CD8-positive, alpha-beta T cell (primary cell): ENCODE measurements at regions of chr10 and their contacts with region 1.

Region 1: DNA sequence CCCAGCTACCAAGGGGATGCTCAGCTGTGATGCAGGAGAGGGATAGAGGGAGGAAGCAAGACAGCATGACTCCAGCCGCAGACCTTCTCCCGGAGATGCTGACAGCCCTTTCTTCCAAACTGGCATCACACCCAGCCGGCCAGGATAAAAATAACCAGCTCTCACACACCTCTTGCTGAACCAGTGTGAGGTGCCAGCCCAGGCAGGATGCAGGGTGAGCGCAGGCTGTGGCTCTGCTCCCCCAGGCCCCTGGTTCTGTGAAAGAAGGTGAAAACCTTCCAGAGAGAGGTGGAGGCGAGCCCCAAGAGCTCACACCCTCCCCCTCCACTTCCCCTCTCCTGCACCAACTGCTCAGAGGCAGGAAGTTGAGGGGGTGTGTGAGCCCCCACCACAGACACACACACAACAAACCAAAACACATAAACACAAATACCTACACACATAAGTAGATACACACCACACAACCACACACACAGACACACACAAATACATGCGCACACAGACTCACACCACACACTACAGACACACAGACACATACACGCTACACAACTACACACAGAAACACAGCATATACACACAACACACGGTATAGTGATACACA is 4.0 kb downstream of the GPR15LG start:
- DNase-seq: peak; percentile 24 to 88 (median 55)
- ATAC-seq: peak; percentile 91
- H3K4me3 ChIP-seq: peak overlapping the region; percentile 10 to 17
- H3K4me3 Mint-ChIP-seq: no peak overlapping the region
- H3K27ac ChIP-seq: peak overlapping the region; percentile 13 to 69
- H3K27ac Mint-ChIP-seq: no peak overlapping the region
- H3K4me1 ChIP-seq: peaks cover 31% of the 10 kb centered on the region
- H3K4me1 Mint-ChIP-seq: peaks cover 12% of the 10 kb centered on the region
- H3K27me3 ChIP-seq: peaks cover 0 to 2% of the 10 kb centered on the region in 2 experiments
- H3K27me3 Mint-ChIP-seq: no peaks in the 10 kb centered on the region
- CTCF ChIP-seq: no peak

Region 2: GRCh38 chr10:84126785-84127167 is 50.9 kb before region 1 on chr10:
- CTCF ChIA-PET with region 1: no interaction called
- POLR2A ChIA-PET with region 1: no interaction called
- intact Hi-C with region 1: no loop called
- DNase-seq: no peak
- ATAC-seq: no peak
- H3K4me3 ChIP-seq: no peak overlapping the region
- H3K4me3 Mint-ChIP-seq: no peak overlapping the region
- H3K27ac ChIP-seq: no peak overlapping the region
- H3K27ac Mint-ChIP-seq: no peak overlapping the region
- H3K4me1 ChIP-seq: no peaks in the 10 kb centered on the region
- H3K4me1 Mint-ChIP-seq: no peaks in the 10 kb centered on the region
- H3K27me3 ChIP-seq: peaks cover 0 to 7% of the 10 kb centered on the region in 2 experiments
- H3K27me3 Mint-ChIP-seq: peaks cover 26% of the 10 kb centered on the region
- CTCF ChIP-seq: no peak

Region 3: DNA sequence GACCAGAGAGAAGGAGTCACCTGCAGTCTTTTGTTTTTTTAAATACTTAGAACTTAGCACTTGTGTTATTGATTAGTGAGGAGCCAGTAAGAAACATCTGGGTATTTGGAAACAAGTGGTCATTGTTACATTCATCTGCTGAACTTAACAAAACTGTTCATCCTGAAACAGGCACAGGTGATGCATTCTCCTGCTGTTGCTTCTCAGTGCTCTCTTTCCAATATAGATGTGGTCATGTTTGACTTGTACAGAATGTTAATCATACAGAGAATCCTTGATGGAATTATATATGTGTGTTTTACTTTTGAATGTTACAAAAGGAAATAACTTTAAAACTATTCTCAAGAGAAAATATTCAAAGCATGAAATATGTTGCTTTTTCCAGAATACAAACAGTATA is 24.9 kb before region 1 on chr10:
- CTCF ChIA-PET with region 1: interaction called, 10 read pairs
- POLR2A ChIA-PET with region 1: interaction called, 7 read pairs
- intact Hi-C with region 1: no loop called
- DNase-seq: no peak
- ATAC-seq: no peak
- H3K4me3 ChIP-seq: no peak overlapping the region
- H3K4me3 Mint-ChIP-seq: no peak overlapping the region
- H3K27ac ChIP-seq: no peak overlapping the region
- H3K27ac Mint-ChIP-seq: no peak overlapping the region
- H3K4me1 ChIP-seq: peaks cover 6% of the 10 kb centered on the region
- H3K4me1 Mint-ChIP-seq: peaks cover 17% of the 10 kb centered on the region
- H3K27me3 ChIP-seq: no peaks in the 10 kb centered on the region
- H3K27me3 Mint-ChIP-seq: no peaks in the 10 kb centered on the region
- CTCF ChIP-seq: no peak

Region 4: GRCh38 chr10:84194424-84195040 is 16.9 kb after region 1 on chr10 and contains the start of gene CDHR1:
- CTCF ChIA-PET with region 1: no interaction called
- POLR2A ChIA-PET with region 1: interaction called, 8 read pairs
- intact Hi-C with region 1: loop called in 1 of 2 experiments (anchors 2 kb)
- DNase-seq: peak; percentile 12 to 79 (median 52)
- ATAC-seq: peak; percentile 70
- H3K4me3 ChIP-seq: peak within 1 kb of the TSS; percentile 49 to 56
- H3K4me3 Mint-ChIP-seq: peak within 1 kb of the TSS; percentile 77
- H3K27ac ChIP-seq: no peak within 1 kb of the TSS
- H3K27ac Mint-ChIP-seq: no peak within 1 kb of the TSS
- H3K4me1 ChIP-seq: peaks cover 26% of the 10 kb centered on the region
- H3K4me1 Mint-ChIP-seq: peaks cover 27% of the 10 kb centered on the region
- H3K27me3 ChIP-seq: peaks cover 0 to 6% of the 10 kb centered on the region in 2 experiments
- H3K27me3 Mint-ChIP-seq: peaks cover 9% of the 10 kb centered on the region
- CTCF ChIP-seq: no peak
- total RNA-seq, gene CDHR1: 1.5 to 1.7 TPM